A549 (cell line): ENCODE measurements at regions of chr5 and their contacts with region 1.

Region 1: DNA sequence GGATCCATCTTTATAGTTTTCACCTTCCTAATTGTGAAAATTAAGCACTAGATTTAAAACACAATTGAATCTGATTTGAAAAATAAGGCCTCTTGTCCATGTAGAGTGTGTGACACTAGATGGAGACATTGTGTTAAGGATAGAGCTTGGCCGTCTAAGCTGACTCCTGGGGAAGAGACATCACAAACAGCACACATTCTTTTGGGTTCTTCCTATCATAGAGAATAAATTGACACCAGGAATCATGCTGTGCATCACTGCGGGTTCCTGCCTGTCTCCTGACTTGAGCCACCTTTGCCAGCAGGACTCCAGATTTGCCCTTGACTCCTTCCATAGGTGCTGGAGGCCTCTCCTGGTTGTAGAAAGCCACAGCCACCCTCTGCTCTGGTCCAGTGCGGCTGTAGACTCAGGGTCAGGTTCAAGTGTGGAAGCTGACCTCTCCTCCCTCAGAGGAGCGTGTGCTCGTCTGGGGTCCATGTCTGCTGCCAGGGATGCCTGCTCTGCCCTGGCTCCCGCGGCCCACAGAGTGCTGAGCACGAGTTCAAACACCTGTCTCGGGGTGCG is 11.2 kb downstream of the ROPN1L start:
- DNase-seq: peak; percentile 85 to 91
- ATAC-seq: peak; percentile 68 to 78
- H3K4me3 ChIP-seq: no peak overlapping the region
- H3K27ac ChIP-seq: peak overlapping the region; percentile 66 to 84
- H3K4me1 ChIP-seq: peaks cover 50% of the 10 kb centered on the region
- CTCF ChIP-seq: peak; percentile 94
- EP300 ChIP-seq: no peak
- POLR2A ChIP-seq: no peak
- RAD21 ChIP-seq: peak; percentile 97 to 100

Region 2: GRCh38 chr5:10427978-10428377 is 24.9 kb before region 1 on chr5:
- CTCF ChIA-PET with region 1: no interaction called
- POLR2A ChIA-PET with region 1: no interaction called
- DNase-seq: no peak
- ATAC-seq: no peak
- H3K4me3 ChIP-seq: no peak overlapping the region
- H3K27ac ChIP-seq: no peak overlapping the region
- H3K4me1 ChIP-seq: no peaks in the 10 kb centered on the region
- CTCF ChIP-seq: no peak
- EP300 ChIP-seq: no peak
- POLR2A ChIP-seq: no peak
- RAD21 ChIP-seq: no peak

Region 3: DNA sequence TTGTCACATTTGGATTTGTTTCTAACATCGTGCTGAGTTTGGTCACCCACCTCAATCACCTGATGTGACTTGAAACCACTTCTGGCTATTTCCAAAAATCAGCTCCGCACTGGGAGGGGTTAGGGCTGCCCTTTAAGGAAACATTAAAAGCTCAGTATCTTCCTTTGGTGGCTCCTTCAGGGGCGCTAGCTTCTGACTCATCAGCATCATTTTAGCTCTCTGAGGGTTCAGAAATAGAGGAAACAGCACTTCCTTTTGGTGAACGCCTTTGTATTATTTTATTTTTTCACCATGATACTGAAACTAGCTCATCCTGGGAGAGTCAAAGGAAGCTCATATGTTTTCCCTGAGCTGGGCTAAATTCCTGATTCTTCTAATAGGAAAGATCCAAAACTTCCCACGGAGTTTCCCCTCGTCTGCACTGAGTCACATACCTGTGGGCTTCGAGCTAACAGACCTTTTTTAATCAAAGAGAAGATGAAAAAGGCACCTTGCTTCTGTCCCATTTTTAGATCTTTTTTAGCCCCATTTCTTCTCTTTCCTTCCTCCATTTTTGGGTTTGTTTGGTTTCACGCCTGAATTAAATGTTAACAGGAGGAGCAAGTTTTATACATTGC is 37.1 kb after region 1 on chr5:
- CTCF ChIA-PET with region 1: interaction called, 18 read pairs
- POLR2A ChIA-PET with region 1: no interaction called
- DNase-seq: no peak
- ATAC-seq: no peak
- H3K4me3 ChIP-seq: no peak overlapping the region
- H3K27ac ChIP-seq: no peak overlapping the region
- H3K4me1 ChIP-seq: 0 out of 3 replicates have a peak, but pooled peaks cover 3% of the 10 kb centered on the region
- CTCF ChIP-seq: no peak
- EP300 ChIP-seq: no peak
- POLR2A ChIP-seq: no peak
- RAD21 ChIP-seq: no peak

Region 4: DNA sequence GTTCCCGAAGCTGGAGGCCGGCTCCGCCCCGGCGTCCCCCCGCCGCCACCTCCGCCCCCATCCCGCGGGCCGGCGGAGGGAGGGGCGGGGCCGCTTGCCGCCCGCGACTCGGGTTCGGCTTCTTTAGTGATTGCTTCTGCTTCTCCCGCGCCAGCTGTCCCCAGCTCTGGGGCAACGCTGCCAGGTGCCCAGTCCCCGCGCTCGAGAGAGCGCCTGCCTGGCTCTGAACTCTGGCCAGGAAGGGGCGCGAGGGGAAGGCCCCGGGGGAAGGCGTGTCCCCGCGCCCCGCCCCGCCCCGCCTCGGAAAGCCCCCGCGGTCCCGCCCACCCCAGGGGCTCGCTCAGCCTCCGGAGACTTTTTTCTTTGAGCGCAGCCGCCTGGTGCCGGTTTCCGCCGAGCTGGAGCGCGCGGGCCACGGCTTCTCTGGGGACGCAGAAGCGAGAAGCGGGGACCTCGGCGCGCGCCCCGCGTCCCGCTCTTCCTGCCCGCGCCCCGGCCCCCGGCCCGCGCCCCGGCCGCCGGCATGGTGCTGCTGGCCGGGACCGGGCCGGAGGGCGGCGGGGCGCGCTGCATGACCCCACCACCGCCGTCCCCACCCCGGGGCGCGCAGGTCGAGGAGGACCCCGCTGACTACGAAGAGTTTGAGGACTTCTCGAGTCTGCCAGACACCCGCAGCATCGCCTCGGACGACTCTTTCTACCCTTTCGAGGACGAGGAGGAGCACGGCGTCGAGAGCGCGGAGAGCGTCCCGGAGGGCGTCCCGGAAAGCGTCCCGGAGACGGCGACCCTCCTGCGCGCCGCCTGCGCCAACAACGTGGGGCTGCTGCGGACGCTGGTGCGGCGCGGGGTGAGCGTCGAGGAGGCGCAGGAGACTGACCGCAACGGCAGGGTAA is 111.3 kb after region 1 on chr5 and contains the start of gene ANKRD33B:
- CTCF ChIA-PET with region 1: interaction called, 14 read pairs
- POLR2A ChIA-PET with region 1: no interaction called
- DNase-seq: peak; percentile 63 to 77
- ATAC-seq: peak; percentile 68 to 69
- H3K4me3 ChIP-seq: peak within 1 kb of the TSS; percentile 89
- H3K27ac ChIP-seq: peak within 1 kb of the TSS; percentile 85 to 99
- H3K4me1 ChIP-seq: peaks cover 46% of the 10 kb centered on the region
- CTCF ChIP-seq: no peak
- EP300 ChIP-seq: no peak
- POLR2A ChIP-seq: peak; percentile 55
- RAD21 ChIP-seq: peak in 1 of 2 experiments; percentile 14; a peak in 1 of 5 replicates
- polyA plus RNA-seq, gene ANKRD33B: 6.9 and 8.2 TPM in 2 replicates

Region 5: GRCh38 chr5:10583663-10584572 is 131.1 kb after region 1 on chr5:
- CTCF ChIA-PET with region 1: interaction called, 15 read pairs
- POLR2A ChIA-PET with region 1: no interaction called
- DNase-seq: no peak
- ATAC-seq: no peak
- H3K4me3 ChIP-seq: no peak overlapping the region
- H3K27ac ChIP-seq: no peak overlapping the region
- H3K4me1 ChIP-seq: peaks cover 14% of the 10 kb centered on the region; the same call in 2 of the 3 replicates
- CTCF ChIP-seq: no peak
- EP300 ChIP-seq: no peak
- POLR2A ChIP-seq: no peak
- RAD21 ChIP-seq: no peak

Region 6: DNA sequence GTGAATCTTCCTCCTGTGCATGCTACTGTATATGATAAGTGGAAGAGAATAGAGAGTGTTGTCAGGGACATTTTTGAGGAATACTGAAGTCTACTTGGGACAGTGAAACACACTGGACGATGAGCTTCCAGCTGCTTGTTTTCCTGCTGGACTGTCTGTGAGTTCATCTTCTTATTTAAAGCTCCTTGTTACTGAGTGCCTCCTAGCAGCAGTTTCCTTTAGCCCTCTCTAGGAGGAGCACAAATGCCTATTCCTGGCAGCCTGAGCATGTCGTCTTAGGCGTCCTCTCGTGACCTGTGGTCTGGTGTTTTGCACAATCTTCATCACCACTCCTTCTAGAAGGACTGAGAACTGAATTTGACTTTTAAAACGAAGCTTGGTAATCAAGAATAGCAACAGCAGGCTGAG is 154.8 kb after region 1 on chr5:
- CTCF ChIA-PET with region 1: interaction called, 479 read pairs
- POLR2A ChIA-PET with region 1: no interaction called
- DNase-seq: peak in 1 of 2 experiments; percentile 63
- ATAC-seq: peak; percentile 71 to 75; a peak in 4 of 6 replicates
- H3K4me3 ChIP-seq: no peak overlapping the region
- H3K27ac ChIP-seq: 0 out of 6 replicates have a peak overlapping the region, but pooled peaks of 1 of the 2 experiments have one; percentile 27
- H3K4me1 ChIP-seq: peaks cover 18% of the 10 kb centered on the region
- CTCF ChIP-seq: no peak
- EP300 ChIP-seq: no peak
- POLR2A ChIP-seq: no peak
- RAD21 ChIP-seq: no peak

Region 7: DNA sequence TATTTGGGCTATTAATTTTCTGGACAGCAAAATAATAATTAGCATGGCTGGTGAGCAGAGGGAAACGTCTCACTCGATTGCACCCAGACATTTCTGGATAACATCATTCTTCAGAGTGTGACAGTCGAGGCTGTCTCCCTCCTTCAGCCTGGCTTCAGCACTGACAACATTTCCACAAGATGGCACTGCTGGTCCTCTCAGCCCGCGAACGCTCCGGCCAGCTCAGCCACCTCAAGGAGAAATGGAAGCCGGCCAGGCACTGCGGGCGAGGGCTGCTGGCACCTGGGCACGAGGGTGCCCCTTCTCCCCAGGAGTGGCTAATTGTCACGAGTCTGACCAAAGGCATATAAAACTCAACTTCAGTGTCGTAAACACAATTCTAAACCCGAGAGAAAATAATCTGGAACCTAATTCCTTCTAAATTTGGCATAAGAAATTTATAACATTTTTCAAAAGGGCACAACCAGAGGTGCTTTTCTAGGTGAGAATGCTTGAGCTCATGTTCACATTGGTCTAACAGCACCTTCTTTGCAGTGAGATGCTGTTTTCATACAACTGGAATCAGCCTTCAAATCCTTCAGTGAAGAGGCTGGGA is 242.3 kb after region 1 on chr5:
- CTCF ChIA-PET with region 1: interaction called, 59 read pairs
- POLR2A ChIA-PET with region 1: no interaction called
- DNase-seq: peak; percentile 75 to 83
- ATAC-seq: peak; percentile 95 to 97
- H3K4me3 ChIP-seq: no peak overlapping the region
- H3K27ac ChIP-seq: no peak overlapping the region
- H3K4me1 ChIP-seq: peaks cover 15% of the 10 kb centered on the region; the same call in 2 of the 3 replicates
- CTCF ChIP-seq: peak; percentile 90
- EP300 ChIP-seq: no peak
- POLR2A ChIP-seq: no peak
- RAD21 ChIP-seq: peak; percentile 95 to 96